ENCODE measurements at regions of chr6 and their contacts with region 1.

Region 1: DNA sequence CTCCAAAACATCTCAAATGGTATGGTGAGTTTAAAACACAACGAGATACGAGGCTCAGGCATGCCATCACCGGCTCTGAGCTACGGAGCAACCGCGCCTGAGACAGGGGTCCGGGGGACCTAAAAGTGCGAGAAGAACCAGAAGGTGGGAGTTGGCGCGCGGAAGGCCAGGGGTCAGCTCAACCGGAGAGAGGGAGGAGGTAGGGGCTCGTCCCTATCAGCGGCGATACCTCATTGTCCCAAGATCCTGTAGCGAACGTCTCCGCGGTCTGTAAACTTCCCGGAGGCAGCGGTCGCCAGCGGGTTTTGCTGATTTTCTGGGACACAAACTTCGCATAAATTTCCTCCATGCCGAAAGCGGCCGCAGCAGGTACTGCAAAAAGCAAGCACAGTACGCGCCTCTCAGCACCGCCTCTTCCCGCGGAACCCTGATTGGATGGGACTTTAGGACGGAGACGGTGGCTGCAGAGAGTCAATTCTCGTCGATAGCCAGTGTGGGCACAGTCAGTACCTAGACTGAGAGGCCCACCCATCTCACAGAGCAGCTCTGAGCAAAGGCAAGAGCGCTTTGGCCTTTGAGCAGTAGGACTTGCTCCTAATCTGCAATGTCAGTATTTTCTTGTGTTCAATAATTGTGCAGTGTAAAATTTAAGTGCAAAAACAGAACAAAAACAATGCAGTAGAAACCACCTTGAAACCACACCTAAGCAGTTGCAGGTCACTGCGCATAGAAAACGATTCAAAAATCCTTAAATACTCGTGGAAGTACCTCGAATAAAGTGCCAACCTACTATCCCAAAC is at the start of gene NUP43:
- DNase-seq: peak; percentile 86 to 93
- H3K4me3 ChIP-seq: peak within 1 kb of the TSS; percentile 76 to 99 (median 94)
- H3K27ac ChIP-seq: peak within 1 kb of the TSS; percentile 83
- H3K4me1 ChIP-seq: peaks cover 0 to 3% (median 0%) of the 10 kb centered on the region in 4 experiments; a peak in 1 of 7 replicates
- H3K27me3 ChIP-seq: no peaks in the 10 kb centered on the region
- CTCF ChIP-seq: peak; percentile 21 to 50 (median 24); a peak in 3 of 4 replicates
- EP300 ChIP-seq: no peak
- POLR2A ChIP-seq: peak in 1 of 2 experiments; percentile 89; a peak in 2 of 3 replicates
- RAD21 ChIP-seq: no peak
- total RNA-seq, gene NUP43: 76.9 and 83.4 TPM in 2 replicates

Region 2: DNA sequence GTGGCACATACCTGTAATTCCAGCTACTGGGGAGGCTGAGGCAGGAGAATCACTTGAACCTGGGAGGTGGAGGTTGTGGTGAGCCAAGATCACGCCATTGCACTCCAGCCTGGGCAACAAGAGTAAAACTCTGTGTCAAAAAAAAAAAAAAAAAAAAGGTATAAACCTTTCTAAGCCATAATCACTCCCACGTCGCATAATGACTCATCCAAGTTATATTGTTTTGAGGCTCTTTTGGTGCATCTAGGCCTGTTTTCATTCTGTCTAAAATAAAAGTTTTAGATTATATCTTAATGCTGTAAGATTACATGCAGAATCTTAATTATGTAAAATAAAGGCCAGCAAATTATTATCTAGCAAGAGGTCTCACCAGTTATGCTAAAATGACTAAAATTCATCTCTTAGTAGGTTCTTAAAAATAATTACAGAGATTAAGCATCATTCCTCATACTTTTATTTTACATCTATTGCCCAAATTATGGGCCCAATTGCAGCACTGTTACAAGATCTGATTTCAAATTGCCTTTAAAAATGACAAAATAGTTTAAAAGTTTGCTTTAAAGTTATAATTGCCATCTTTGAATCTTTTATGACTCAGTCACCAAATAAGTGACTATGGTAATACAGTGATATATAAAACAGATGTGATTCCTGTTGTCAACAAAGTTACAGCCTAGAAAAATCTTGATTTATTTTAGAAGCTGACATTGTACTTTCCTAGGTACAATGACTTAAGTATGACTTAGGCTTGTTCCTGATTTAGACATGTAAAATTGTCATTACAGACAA is 356.6 kb before region 1 on chr6:
- CTCF ChIA-PET with region 1: no interaction called
- POLR2A ChIA-PET with region 1: no interaction called
- DNase-seq: no peak
- H3K4me3 ChIP-seq: no peak overlapping the region
- H3K27ac ChIP-seq: no peak overlapping the region
- H3K4me1 ChIP-seq: no peaks in the 10 kb centered on the region
- H3K27me3 ChIP-seq: no peaks in the 10 kb centered on the region
- CTCF ChIP-seq: no peak
- EP300 ChIP-seq: no peak
- POLR2A ChIP-seq: no peak
- RAD21 ChIP-seq: no peak

Region 3: GRCh38 chr6:149717588-149718458 is 28.5 kb before region 1 on chr6 and contains the start of gene LATS1:
- CTCF ChIA-PET with region 1: interaction called, 11 read pairs
- POLR2A ChIA-PET with region 1: interaction called, 18 read pairs
- DNase-seq: peak in 1 of 2 experiments; percentile 95
- H3K4me3 ChIP-seq: peak within 1 kb of the TSS; percentile 81 to 93 (median 86)
- H3K27ac ChIP-seq: peak within 1 kb of the TSS; percentile 93
- H3K4me1 ChIP-seq: peaks cover 0 to 4% (median 2%) of the 10 kb centered on the region in 4 experiments; a peak in 3 of 7 replicates
- H3K27me3 ChIP-seq: no peaks in the 10 kb centered on the region
- CTCF ChIP-seq: 0 out of 4 replicates have a peak, but pooled peaks of 1 of the 3 experiments have one; percentile 9
- EP300 ChIP-seq: no peak
- POLR2A ChIP-seq: peak; percentile 72 to 98
- RAD21 ChIP-seq: no peak
- total RNA-seq, gene LATS1: 20.3 and 21.7 TPM in 2 replicates

Region 4: DNA sequence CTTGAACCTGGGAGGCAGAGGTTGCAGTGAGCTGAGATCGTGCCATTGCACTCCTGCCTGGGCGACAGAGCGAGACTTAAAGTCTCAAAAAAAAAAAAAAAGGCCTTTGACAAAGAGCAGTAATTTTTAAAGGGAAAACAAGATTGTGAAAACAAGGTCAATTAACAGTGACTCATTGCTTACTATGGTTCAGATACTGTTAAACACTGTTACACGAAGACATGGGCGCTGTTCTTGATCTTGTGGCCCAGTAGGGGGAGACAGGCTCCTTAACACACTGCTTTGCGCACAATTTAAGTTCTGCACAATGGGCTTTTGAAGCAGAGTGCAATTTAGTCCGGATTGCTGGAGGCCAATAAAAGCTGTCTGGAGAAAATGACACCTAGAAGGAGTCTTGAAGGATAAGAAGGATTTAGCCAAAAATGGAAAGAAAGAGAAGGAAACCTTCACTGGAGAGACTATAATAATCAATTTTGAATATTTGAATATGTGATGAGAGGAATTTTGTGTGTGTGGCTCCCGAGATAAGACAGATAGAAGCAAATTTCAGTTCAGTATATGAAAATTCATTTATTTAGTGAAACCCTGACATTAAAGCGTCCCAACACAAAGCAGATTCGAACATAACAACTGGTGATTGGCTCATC is 22.5 kb before region 1 on chr6:
- CTCF ChIA-PET with region 1: interaction called, 11 read pairs
- POLR2A ChIA-PET with region 1: interaction called, 11 read pairs
- DNase-seq: no peak
- H3K4me3 ChIP-seq: no peak overlapping the region
- H3K27ac ChIP-seq: no peak overlapping the region
- H3K4me1 ChIP-seq: no peaks in the 10 kb centered on the region
- H3K27me3 ChIP-seq: no peaks in the 10 kb centered on the region
- CTCF ChIP-seq: peak; percentile 50 to 75 (median 55)
- EP300 ChIP-seq: no peak
- POLR2A ChIP-seq: no peak
- RAD21 ChIP-seq: peak; percentile 46 to 57

Region 5: GRCh38 chr6:150741633-150742504 is 995.5 kb after region 1 on chr6:
- CTCF ChIA-PET with region 1: no interaction called
- POLR2A ChIA-PET with region 1: no interaction called
- DNase-seq: no peak
- H3K4me3 ChIP-seq: no peak overlapping the region
- H3K27ac ChIP-seq: no peak overlapping the region
- H3K4me1 ChIP-seq: no peaks in the 10 kb centered on the region
- H3K27me3 ChIP-seq: no peaks in the 10 kb centered on the region
- CTCF ChIP-seq: peak; percentile 27 to 63 (median 52)
- EP300 ChIP-seq: no peak
- POLR2A ChIP-seq: no peak
- RAD21 ChIP-seq: peak; percentile 63 to 71